Keratinocyte (primary cell): ENCODE measurements at regions of chr15 and their contacts with region 1.

Region 1: GRCh38 chr15:83559310-83559966 is 94.5 kb upstream of the ADAMTSL3 start:
- DNase-seq: peak; percentile 32
- H3K4me3 ChIP-seq: no peak overlapping the region
- H3K27ac ChIP-seq: no peak overlapping the region
- H3K4me1 ChIP-seq: no peaks in the 10 kb centered on the region
- H3K27me3 ChIP-seq: no peaks in the 10 kb centered on the region
- CTCF ChIP-seq: peak; percentile 69 to 97 (median 95)

Region 2: GRCh38 chr15:83250801-83251200 is 308.6 kb before region 1 on chr15:
- dilution Hi-C with region 1: loop called (anchors 25 kb)
- DNase-seq: no peak
- H3K4me3 ChIP-seq: no peak overlapping the region
- H3K27ac ChIP-seq: no peak overlapping the region
- H3K4me1 ChIP-seq: peaks cover 4% of the 10 kb centered on the region
- H3K27me3 ChIP-seq: peaks cover 8% of the 10 kb centered on the region
- CTCF ChIP-seq: no peak

Region 3: DNA sequence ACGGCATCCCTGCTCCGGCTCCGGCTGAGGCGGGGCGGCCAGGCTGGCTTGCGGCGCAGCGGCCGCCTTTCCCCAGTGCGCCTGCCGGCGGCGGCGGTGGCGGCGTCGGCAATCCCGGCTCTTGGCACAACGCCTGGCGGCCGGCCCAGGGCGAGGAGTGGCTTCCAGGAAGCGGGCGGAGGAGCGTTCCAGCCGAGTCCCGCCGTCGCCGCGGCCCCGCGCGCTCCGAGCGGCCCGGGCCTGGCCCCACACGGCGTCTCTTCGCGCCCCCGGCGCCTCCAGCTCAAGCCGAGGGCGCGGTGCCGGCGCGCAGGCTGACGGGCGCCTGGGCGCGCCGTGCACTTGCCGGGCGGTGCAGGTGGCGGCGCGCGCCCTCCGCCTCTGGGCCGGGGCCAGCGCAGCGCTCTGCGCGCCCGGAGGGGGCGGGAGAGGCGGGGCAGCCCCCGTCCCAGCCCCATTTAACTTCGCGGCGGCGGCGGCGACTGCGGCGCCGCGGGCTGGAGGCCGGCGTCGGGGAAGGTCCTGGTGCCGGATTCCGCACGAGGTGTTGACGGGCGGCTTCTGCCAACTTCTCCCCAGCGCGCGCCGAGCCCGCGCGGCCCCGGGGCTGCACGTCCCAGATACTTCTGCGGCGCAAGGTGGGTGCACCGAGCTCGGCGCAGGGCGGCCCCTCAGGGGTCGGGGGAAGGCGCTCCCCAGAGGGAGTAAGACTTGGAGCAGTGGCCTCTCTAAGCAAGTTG is 94.4 kb after region 1 on chr15 and contains the start of gene ADAMTSL3:
- dilution Hi-C with region 1: no loop called
- DNase-seq: no peak
- H3K4me3 ChIP-seq: peak within 1 kb of the TSS in 1 of 3 experiments; percentile 29
- H3K27ac ChIP-seq: no peak within 1 kb of the TSS
- H3K4me1 ChIP-seq: no peaks in the 10 kb centered on the region
- H3K27me3 ChIP-seq: peaks cover 36% of the 10 kb centered on the region
- CTCF ChIP-seq: no peak
- polyA plus RNA-seq, gene ADAMTSL3: 0.01 TPM in 3 replicates